IMR-90 (cell line): ENCODE measurements at regions of chr11 and their contacts with region 1.

Region 1: GRCh38 chr11:78715639-78716311 is 141.1 kb upstream of the NARS2 start:
- DNase-seq: peak; percentile 91
- ATAC-seq: peak; percentile 90
- H3K4me3 ChIP-seq: no peak overlapping the region
- H3K27ac ChIP-seq: no peak overlapping the region
- H3K4me1 ChIP-seq: peaks cover 4% of the 10 kb centered on the region; the same call in 1 of the 2 replicates
- H3K27me3 ChIP-seq: no peaks in the 10 kb centered on the region
- CTCF ChIP-seq: peak; percentile 81
- POLR2A ChIP-seq: no peak
- RAD21 ChIP-seq: peak; percentile 75

Region 2: GRCh38 chr11:79100093-79100910 is 384.5 kb after region 1 on chr11:
- CTCF ChIA-PET with region 1: no interaction called
- POLR2A ChIA-PET with region 1: no interaction called
- dilution Hi-C with region 1: no loop called
- in situ Hi-C with region 1: no loop called
- intact Hi-C with region 1: loop called (anchors 5 kb)
- DNase-seq: peak; percentile 55
- ATAC-seq: peak; percentile 93
- H3K4me3 ChIP-seq: no peak overlapping the region
- H3K27ac ChIP-seq: no peak overlapping the region
- H3K4me1 ChIP-seq: peaks cover 5% of the 10 kb centered on the region
- H3K27me3 ChIP-seq: no peaks in the 10 kb centered on the region
- CTCF ChIP-seq: peak; percentile 77
- POLR2A ChIP-seq: no peak
- RAD21 ChIP-seq: peak; percentile 84